Transverse colon (tissue), 4 donors: ENCODE measurements at regions of chr12 and their contacts with region 1.

Region 1: DNA sequence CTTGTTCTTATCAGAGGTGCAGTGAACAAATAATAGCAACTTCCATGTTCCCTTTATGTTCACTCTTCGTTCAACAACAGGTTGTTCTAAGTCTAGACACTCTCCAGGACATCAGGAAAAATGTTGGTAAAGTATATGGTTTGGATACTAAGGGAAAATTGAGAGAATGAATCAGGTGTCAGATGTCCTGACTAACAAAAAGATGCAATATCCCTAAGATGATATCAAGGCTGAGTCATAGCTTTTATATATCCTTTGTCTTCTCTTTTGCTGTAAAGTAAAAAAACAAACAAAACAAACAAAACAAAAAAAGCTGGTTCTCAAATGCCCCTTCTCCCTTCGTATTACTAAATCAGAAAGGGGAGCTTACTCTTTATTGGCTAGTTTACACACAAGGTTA is 11.1 kb downstream of the GLIPR1L1 start:
- DNase-seq: no peak
- H3K4me3 ChIP-seq: no peak overlapping the region
- H3K27ac ChIP-seq: no peak overlapping the region
- H3K4me1 ChIP-seq: no peaks in the 10 kb centered on the region
- H3K27me3 ChIP-seq: no peaks in the 10 kb centered on the region
- CTCF ChIP-seq: no peak
- EP300 ChIP-seq: no peak
- POLR2A ChIP-seq: no peak

Region 2: GRCh38 chr12:75177997-75178396 is 167.5 kb before region 1 on chr12:
- in situ Hi-C with region 1: no loop called
- intact Hi-C with region 1: no loop called
- DNase-seq: no peak
- H3K4me3 ChIP-seq: no peak overlapping the region
- H3K27ac ChIP-seq: no peak overlapping the region
- H3K4me1 ChIP-seq: no peaks in the 10 kb centered on the region
- H3K27me3 ChIP-seq: no peaks in the 10 kb centered on the region
- CTCF ChIP-seq: no peak
- EP300 ChIP-seq: no peak
- POLR2A ChIP-seq: no peak

Region 3: DNA sequence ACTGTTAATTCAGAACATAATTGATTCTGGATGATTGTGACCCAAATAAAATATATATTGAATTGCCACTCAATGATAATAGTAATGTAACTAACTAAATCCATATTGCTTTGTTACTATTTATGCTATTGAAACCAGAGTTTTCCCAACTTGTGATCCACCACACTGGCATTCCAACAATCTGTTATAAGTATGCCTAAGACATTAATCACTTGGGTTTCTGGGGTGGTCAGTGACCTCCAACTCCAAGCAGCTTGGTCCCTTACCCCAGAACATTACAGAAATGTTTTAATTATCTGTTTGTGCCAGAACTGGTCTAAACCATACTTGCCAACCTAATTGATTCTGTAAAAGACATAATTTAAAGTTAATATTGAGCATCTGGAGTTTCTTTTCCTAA is 30.0 kb before region 1 on chr12:
- in situ Hi-C with region 1: no loop called
- intact Hi-C with region 1: loop called (anchors 1 kb)
- DNase-seq: no peak
- H3K4me3 ChIP-seq: no peak overlapping the region
- H3K27ac ChIP-seq: no peak overlapping the region
- H3K4me1 ChIP-seq: no peaks in the 10 kb centered on the region
- H3K27me3 ChIP-seq: no peaks in the 10 kb centered on the region
- CTCF ChIP-seq: no peak
- EP300 ChIP-seq: no peak
- POLR2A ChIP-seq: no peak

Region 4: GRCh38 chr12:75658901-75659383 is 313.4 kb after region 1 on chr12:
- in situ Hi-C with region 1: no loop called
- intact Hi-C with region 1: no loop called
- DNase-seq: no peak
- H3K4me3 ChIP-seq: no peak overlapping the region
- H3K27ac ChIP-seq: no peak overlapping the region
- H3K4me1 ChIP-seq: peaks cover 0 to 6% (median 0%) of the 10 kb centered on the region in 4 donors
- H3K27me3 ChIP-seq: no peaks in the 10 kb centered on the region
- CTCF ChIP-seq: no peak
- EP300 ChIP-seq: no peak
- POLR2A ChIP-seq: no peak